ENCODE measurements at regions of chr6 and their contacts with region 1.

Region 1: DNA sequence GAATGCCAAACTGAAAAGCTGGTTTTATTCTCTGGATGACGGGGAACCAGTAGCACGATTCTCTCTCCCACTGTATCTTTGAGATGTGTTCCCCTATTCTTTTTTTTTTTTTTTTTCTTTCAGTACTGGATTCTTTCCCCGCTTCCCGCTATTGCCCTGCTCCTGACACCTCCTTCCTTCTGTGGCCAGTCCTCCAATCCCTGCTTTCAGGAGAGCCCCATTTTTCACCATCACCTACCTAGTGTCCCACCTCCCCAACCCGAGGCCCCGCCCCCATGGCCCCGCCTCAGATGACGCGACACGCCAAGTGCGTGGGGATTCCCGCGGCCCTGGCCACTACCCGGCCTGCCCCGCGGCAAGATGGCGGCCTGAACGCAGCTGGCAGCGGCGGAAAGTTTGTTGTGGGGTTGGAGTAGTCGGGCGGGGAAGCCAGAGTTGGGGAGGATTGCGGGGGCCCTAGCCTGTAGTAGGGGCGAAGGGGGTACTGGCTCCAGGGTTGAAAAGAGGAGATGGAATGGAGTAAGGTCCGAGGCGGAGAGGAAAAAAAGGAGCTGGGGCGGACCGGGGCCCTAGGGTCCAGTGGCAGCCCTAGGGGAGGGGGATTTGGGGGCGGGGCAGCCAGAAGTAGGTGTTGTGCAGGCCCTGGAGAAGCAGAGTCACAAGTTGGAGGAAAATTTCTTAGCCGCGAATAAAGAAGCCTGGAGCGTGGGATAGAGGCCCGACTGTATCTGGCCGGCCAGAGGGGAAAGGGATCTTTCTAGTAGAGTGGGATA is at the start of gene TJAP1:
- DNase-seq: peak; percentile 94
- H3K4me3 Mint-ChIP-seq: peak within 1 kb of the TSS; percentile 97
- H3K27ac Mint-ChIP-seq: peak within 1 kb of the TSS; percentile 97
- H3K4me1 Mint-ChIP-seq: peaks cover 33% of the 10 kb centered on the region
- H3K27me3 Mint-ChIP-seq: no peaks in the 10 kb centered on the region
- total RNA-seq, gene TJAP1: 43.4 and 48.2 TPM in 2 replicates

Region 2: GRCh38 chr6:42742116-42742894 is 735.1 kb before region 1 on chr6:
- intact Hi-C with region 1: no loop called
- DNase-seq: no peak
- H3K4me3 Mint-ChIP-seq: peak overlapping the region; percentile 15
- H3K27ac Mint-ChIP-seq: no peak overlapping the region
- H3K4me1 Mint-ChIP-seq: peaks cover 15% of the 10 kb centered on the region
- H3K27me3 Mint-ChIP-seq: peaks cover 9% of the 10 kb centered on the region

Region 3: DNA sequence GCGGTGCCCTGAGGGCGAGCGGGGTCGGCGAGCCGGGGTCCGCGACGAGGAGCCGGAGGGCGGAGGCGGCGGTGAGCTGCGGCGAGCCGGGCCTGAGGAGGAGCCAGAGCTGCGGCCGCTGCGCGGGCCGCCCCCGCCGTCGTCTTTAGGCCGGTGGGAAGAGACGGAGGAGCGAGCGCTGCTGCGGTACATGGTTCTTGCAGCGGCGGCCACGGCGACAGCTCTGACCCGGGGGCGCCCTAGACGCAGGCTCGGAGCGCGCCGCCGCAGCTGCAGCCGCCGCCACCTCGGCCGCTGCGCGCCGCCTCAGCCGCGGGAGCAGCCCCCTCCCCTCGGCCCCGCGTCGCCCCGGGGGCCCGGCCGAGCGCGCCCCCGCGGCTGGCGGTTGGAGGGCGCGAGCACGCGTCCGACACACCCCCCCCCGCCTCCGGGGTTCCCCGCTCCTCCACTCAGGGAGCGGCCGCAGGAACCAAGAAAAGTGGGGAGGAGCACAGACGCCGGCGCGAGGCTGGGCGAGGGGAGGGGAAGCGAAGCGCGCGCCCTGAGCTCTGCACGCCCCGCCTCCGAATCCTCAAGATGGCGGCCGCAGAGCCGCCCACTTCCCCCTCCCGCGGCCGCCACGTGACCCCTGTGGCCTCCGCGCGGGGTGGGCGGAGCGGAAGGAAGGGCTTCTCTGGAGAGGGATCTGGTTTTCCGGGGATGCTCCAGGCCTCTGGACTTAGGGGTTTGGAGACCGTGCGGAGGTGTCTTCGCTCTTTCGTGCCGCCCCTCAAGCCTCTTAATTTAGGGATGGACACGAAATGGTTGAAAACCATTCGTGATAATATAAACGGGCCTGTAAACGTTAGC is 108.0 kb before region 1 on chr6 and contains the start of gene ZNF318:
- intact Hi-C with region 1: loop called (anchors 1 kb)
- DNase-seq: peak; percentile 93
- H3K4me3 Mint-ChIP-seq: peak within 1 kb of the TSS; percentile 86
- H3K27ac Mint-ChIP-seq: peak within 1 kb of the TSS; percentile 91
- H3K4me1 Mint-ChIP-seq: peaks cover 36% of the 10 kb centered on the region
- H3K27me3 Mint-ChIP-seq: peaks cover 2% of the 10 kb centered on the region
- total RNA-seq, gene ZNF318: 9.1 and 9.7 TPM in 2 replicates

Region 4: DNA sequence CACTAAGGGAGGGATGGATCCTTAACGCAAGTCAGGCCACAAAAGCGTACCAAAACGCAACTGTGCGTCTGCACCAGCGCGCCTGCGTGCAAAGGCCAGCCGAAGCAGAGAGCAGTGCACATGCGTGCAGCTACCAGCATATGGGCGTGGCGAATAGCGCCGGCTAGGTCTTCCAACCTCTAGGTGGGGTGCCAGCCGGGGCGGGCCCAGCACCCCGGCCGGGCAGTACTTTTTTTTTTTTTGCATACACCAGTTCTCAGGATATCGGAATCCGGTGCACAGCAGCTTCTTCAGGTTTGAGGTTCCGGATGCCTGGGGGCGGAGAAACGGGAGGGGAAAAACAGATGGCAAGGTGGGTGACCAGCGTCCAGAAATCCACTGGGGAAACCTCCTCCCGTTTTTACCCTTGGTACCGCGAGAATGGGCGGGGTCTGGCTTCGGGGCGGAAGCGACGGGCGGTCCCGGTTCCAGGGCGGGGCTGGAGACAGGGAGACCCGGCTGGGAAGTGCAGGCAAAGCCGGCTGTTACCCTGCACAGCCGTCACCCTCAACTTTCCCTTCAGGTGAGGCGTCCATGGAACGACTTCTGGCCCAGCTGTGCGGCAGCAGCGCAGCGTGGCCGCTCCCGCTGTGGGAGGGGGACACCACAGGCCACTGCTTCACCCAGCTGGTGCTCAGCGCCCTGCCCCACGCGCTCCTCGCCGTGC is 49.9 kb before region 1 on chr6 and contains the start of gene ABCC10:
- intact Hi-C with region 1: loop called (anchors 1 kb)
- DNase-seq: peak; percentile 93
- H3K4me3 Mint-ChIP-seq: peak within 1 kb of the TSS; percentile 96
- H3K27ac Mint-ChIP-seq: peak within 1 kb of the TSS; percentile 96
- H3K4me1 Mint-ChIP-seq: peaks cover 17% of the 10 kb centered on the region
- H3K27me3 Mint-ChIP-seq: no peaks in the 10 kb centered on the region
- total RNA-seq, gene ABCC10: 40.5 and 43.6 TPM in 2 replicates

Region 5: GRCh38 chr6:43506667-43507471 is 29.4 kb after region 1 on chr6:
- intact Hi-C with region 1: loop called (anchors 2 kb)
- DNase-seq: peak; percentile 74
- H3K4me3 Mint-ChIP-seq: no peak overlapping the region
- H3K27ac Mint-ChIP-seq: no peak overlapping the region
- H3K4me1 Mint-ChIP-seq: peaks cover 13% of the 10 kb centered on the region
- H3K27me3 Mint-ChIP-seq: peaks cover 18% of the 10 kb centered on the region

Region 6: GRCh38 chr6:43575772-43576551 is 98.5 kb after region 1 on chr6 and contains the starts of genes POLH and XPO5:
- intact Hi-C with region 1: loop called (anchors 1 kb)
- DNase-seq: peak; percentile 90
- H3K4me3 Mint-ChIP-seq: peak within 1 kb of the TSS; percentile 91
- H3K27ac Mint-ChIP-seq: peak within 1 kb of the TSS; percentile 86
- H3K4me1 Mint-ChIP-seq: peaks cover 43% of the 10 kb centered on the region
- H3K27me3 Mint-ChIP-seq: no peaks in the 10 kb centered on the region
- total RNA-seq, gene POLH: 35.7 and 39.1 TPM in 2 replicates
- total RNA-seq, gene XPO5: 135 and 149 TPM in 2 replicates

Region 7: DNA sequence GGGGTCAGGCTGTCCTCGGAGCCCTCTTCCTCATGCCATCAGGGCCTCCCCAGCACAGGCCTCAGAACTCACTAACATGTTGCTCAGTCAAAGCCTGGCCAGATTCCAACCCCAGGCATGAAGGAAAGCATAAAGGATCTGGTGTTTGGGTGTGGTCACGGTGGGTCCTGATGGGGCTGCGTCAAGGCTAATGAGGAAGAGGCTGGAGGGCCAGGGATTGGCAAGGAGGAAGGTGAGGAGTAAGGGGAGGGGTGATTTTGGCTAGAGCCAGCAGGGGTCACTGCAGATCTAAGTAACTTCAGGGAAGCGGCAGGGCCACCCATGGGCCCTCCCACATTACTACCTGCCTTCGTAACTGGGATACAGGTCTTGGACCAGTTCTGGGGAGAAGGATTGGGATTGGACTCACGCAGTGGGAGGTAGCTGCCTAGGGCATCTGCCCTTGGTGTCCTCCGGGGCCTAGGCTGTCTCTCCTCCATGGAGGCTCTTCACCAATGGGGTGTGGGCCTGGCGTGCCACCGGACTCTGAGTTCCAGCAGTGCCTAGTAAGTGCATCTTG is 246.4 kb after region 1 on chr6:
- intact Hi-C with region 1: no loop called
- DNase-seq: peak; percentile 50
- H3K4me3 Mint-ChIP-seq: no peak overlapping the region
- H3K27ac Mint-ChIP-seq: no peak overlapping the region
- H3K4me1 Mint-ChIP-seq: peaks cover 32% of the 10 kb centered on the region
- H3K27me3 Mint-ChIP-seq: peaks cover 6% of the 10 kb centered on the region

Measured in activated T-helper 1 cell treated with anti-CD3 and anti-CD28 coated beads, Interleukin-12 subunit alpha, Interleukin-12 subunit beta, Interleukin-2, Interleukin-4 antibody, amounts not matched to agents 30 ng/mL and 10 ng/mL and 1 ng/mL, durations not matched to agents 14 hours and 24 hours and 36 hours (primary cell).